Natural killer cell (primary cell): ENCODE measurements at regions of chr17 and their contacts with region 1.

Region 1: DNA sequence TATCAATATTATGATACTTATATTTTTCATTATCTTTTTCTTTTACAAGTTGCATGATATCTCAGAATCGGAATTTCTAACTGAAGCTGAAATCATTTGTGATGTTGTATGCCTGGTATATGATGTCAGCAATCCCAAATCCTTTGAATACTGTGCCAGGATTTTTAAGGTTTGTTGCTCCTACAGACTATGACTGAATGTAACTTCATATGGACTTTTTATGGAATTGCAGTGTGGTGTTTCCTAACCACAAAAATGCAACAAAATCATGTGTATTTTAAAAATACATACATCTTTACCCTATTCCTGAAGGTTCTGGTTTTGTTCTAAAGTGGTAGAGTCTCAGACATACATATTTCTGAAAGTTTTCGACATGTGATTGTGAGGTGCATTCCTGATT is 58.8 kb upstream of the RHBDL3 start:
- DNase-seq: no peak
- ATAC-seq: no peak
- H3K4me3 ChIP-seq: no peak overlapping the region
- H3K4me3 Mint-ChIP-seq: no peak overlapping the region
- H3K27ac ChIP-seq: no peak overlapping the region
- H3K27ac Mint-ChIP-seq: no peak overlapping the region
- H3K4me1 ChIP-seq: no peaks in the 10 kb centered on the region
- H3K4me1 Mint-ChIP-seq: no peaks in the 10 kb centered on the region
- H3K27me3 ChIP-seq: no peaks in the 10 kb centered on the region
- H3K27me3 Mint-ChIP-seq: no peaks in the 10 kb centered on the region
- CTCF ChIP-seq: no peak

Region 2: DNA sequence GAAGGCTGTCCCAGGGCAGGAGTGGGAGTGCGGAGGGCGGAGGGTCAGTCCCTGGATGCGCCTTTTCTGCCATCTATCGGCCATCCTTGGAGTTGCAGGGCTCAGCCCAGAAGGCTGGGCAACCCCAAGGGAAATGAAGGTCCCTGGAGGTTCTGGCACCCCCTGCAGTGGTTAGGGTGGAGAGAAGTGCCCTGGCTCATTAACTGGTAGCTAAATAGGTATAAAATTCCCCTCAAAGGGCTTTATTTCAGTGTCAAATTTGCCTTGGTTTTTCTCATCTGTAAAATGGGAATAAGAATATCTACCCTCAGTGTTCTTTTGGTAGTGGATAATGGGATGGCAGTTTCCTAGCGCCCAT is 112.7 kb after region 1 on chr17:
- intact Hi-C with region 1: loop called (anchors 2 kb)
- DNase-seq: peak; percentile 76 to 84
- ATAC-seq: peak; percentile 90 to 97 (median 95)
- H3K4me3 ChIP-seq: peak overlapping the region; percentile 18
- H3K4me3 Mint-ChIP-seq: peak overlapping the region; percentile 78
- H3K27ac ChIP-seq: no peak overlapping the region
- H3K27ac Mint-ChIP-seq: peak overlapping the region in 1 of 2 donors; percentile 54
- H3K4me1 ChIP-seq: peaks cover 23% of the 10 kb centered on the region
- H3K4me1 Mint-ChIP-seq: peaks cover 0 to 11% of the 10 kb centered on the region in 2 donors
- H3K27me3 ChIP-seq: peaks cover 3% of the 10 kb centered on the region
- H3K27me3 Mint-ChIP-seq: peaks cover 0 to 3% of the 10 kb centered on the region in 2 donors
- CTCF ChIP-seq: peak; percentile 93